ENCODE measurements at regions of chr1 and their contacts with region 1.

Region 1: DNA sequence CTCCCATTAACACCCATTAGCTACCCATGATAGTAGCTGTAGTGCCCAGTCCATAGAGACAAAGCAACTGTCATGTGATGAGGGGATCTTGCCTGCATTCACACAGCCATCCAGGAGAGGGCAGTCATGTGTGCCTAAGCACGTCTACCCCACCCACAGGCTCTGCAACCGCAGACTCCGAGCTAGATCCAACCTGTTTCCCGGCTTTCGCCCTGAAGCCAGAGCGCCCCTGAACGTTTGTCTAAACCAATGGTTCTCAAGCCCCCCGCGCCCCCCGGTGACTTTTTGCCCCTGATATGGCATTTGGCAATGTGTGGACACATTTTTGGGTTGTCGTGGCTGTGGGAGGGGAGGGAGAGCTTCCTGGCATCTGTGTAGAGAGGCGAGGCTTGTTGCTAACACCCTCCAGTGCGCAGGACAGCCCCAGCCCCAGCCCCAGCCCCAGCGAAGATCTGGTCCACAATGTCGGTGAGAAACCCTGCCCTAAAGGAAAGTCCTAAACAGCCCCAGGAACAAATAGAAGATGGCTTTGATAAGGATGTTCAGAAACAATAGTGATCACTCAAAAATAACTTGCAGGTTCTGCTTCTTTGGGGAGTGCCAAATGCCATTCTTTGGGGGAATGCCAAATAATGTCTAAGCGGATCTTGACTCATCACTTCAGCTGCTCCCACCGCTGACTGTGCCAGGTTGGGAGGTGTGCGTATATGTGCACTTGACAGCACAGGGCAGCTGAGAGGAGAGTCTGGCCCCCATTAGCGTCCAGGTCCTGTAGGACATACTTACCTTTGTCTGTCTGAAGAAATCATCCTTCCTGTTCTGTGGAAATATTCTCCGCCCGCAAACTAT is 34.5 kb downstream of the SLC44A3 start:
- DNase-seq: peak; percentile 87
- ATAC-seq: peak; percentile 98
- H3K4me3 ChIP-seq: peak overlapping the region in 4 of 5 experiments; percentile 23 to 75 (median 58)
- H3K4me3 Mint-ChIP-seq: no peak overlapping the region
- H3K27ac ChIP-seq: no peak overlapping the region
- H3K27ac Mint-ChIP-seq: no peak overlapping the region
- H3K4me1 ChIP-seq: peaks cover 5 to 6% of the 10 kb centered on the region in 2 donors
- H3K4me1 Mint-ChIP-seq: no peaks in the 10 kb centered on the region
- H3K27me3 ChIP-seq: peaks cover 0 to 6% (median 2%) of the 10 kb centered on the region in 4 experiments
- H3K27me3 Mint-ChIP-seq: peaks cover 4% of the 10 kb centered on the region
- CTCF ChIP-seq: peak; percentile 83

Region 2: GRCh38 chr1:94836891-94837290 is 17.8 kb before region 1 on chr1:
- CTCF ChIA-PET with region 1: interaction called, 12 read pairs
- POLR2A ChIA-PET with region 1: no interaction called
- intact Hi-C with region 1: no loop called
- DNase-seq: no peak
- ATAC-seq: no peak
- H3K4me3 ChIP-seq: no peak overlapping the region
- H3K4me3 Mint-ChIP-seq: no peak overlapping the region
- H3K27ac ChIP-seq: no peak overlapping the region
- H3K27ac Mint-ChIP-seq: no peak overlapping the region
- H3K4me1 ChIP-seq: no peaks in the 10 kb centered on the region
- H3K4me1 Mint-ChIP-seq: no peaks in the 10 kb centered on the region
- H3K27me3 ChIP-seq: peaks cover 0 to 3% (median 0%) of the 10 kb centered on the region in 4 experiments
- H3K27me3 Mint-ChIP-seq: peaks cover 34% of the 10 kb centered on the region
- CTCF ChIP-seq: no peak

Region 3: GRCh38 chr1:94926915-94927404 is 72.3 kb after region 1 on chr1 and contains the start of gene CNN3:
- CTCF ChIA-PET with region 1: interaction called, 17 read pairs
- POLR2A ChIA-PET with region 1: no interaction called
- intact Hi-C with region 1: loop called (anchors 1 kb)
- DNase-seq: peak; percentile 86
- ATAC-seq: peak; percentile 85
- H3K4me3 ChIP-seq: peak within 1 kb of the TSS; percentile 56 to 67 (median 61)
- H3K4me3 Mint-ChIP-seq: peak within 1 kb of the TSS; percentile 95
- H3K27ac ChIP-seq: peak within 1 kb of the TSS in 1 of 2 donors; percentile 82
- H3K27ac Mint-ChIP-seq: peak within 1 kb of the TSS; percentile 80
- H3K4me1 ChIP-seq: peaks cover 24 to 28% of the 10 kb centered on the region in 2 donors
- H3K4me1 Mint-ChIP-seq: peaks cover 26% of the 10 kb centered on the region
- H3K27me3 ChIP-seq: peaks cover 0 to 30% (median 9%) of the 10 kb centered on the region in 4 experiments
- H3K27me3 Mint-ChIP-seq: peaks cover 27% of the 10 kb centered on the region
- CTCF ChIP-seq: no peak
- total RNA-seq, gene CNN3: 17.2 and 21.1 TPM in 2 replicates

Region 4: GRCh38 chr1:95043141-95043980 is 188.7 kb after region 1 on chr1:
- CTCF ChIA-PET with region 1: interaction called, 288 read pairs
- POLR2A ChIA-PET with region 1: interaction called, 20 read pairs
- intact Hi-C with region 1: no loop called
- DNase-seq: peak; percentile 87
- ATAC-seq: peak; percentile 99
- H3K4me3 ChIP-seq: no peak overlapping the region
- H3K4me3 Mint-ChIP-seq: no peak overlapping the region
- H3K27ac ChIP-seq: no peak overlapping the region
- H3K27ac Mint-ChIP-seq: no peak overlapping the region
- H3K4me1 ChIP-seq: peaks cover 0 to 3% of the 10 kb centered on the region in 2 donors
- H3K4me1 Mint-ChIP-seq: no peaks in the 10 kb centered on the region
- H3K27me3 ChIP-seq: no peaks in the 10 kb centered on the region
- H3K27me3 Mint-ChIP-seq: no peaks in the 10 kb centered on the region
- CTCF ChIP-seq: peak; percentile 99

Region 5: GRCh38 chr1:95072532-95073419 is 218.1 kb after region 1 on chr1 and contains the start of gene ALG14:
- CTCF ChIA-PET with region 1: interaction called, 33 read pairs
- POLR2A ChIA-PET with region 1: no interaction called
- intact Hi-C with region 1: loop called (anchors 1 kb)
- DNase-seq: peak; percentile 98
- ATAC-seq: peak; percentile 95
- H3K4me3 ChIP-seq: peak within 1 kb of the TSS; percentile 78 to 92 (median 86)
- H3K4me3 Mint-ChIP-seq: peak within 1 kb of the TSS; percentile 98
- H3K27ac ChIP-seq: peak within 1 kb of the TSS; percentile 66 to 70
- H3K27ac Mint-ChIP-seq: peak within 1 kb of the TSS; percentile 99
- H3K4me1 ChIP-seq: peaks cover 11 to 14% of the 10 kb centered on the region in 2 donors
- H3K4me1 Mint-ChIP-seq: peaks cover 20% of the 10 kb centered on the region
- H3K27me3 ChIP-seq: peaks cover 0 to 2% (median 0%) of the 10 kb centered on the region in 4 experiments
- H3K27me3 Mint-ChIP-seq: no peaks in the 10 kb centered on the region
- CTCF ChIP-seq: no peak
- total RNA-seq, gene ALG14: 2.6 and 3.3 TPM in 2 replicates

Measured in B cell (primary cell).